ENCODE measurements at regions of chr4 and their contacts with region 1.

Region 1: DNA sequence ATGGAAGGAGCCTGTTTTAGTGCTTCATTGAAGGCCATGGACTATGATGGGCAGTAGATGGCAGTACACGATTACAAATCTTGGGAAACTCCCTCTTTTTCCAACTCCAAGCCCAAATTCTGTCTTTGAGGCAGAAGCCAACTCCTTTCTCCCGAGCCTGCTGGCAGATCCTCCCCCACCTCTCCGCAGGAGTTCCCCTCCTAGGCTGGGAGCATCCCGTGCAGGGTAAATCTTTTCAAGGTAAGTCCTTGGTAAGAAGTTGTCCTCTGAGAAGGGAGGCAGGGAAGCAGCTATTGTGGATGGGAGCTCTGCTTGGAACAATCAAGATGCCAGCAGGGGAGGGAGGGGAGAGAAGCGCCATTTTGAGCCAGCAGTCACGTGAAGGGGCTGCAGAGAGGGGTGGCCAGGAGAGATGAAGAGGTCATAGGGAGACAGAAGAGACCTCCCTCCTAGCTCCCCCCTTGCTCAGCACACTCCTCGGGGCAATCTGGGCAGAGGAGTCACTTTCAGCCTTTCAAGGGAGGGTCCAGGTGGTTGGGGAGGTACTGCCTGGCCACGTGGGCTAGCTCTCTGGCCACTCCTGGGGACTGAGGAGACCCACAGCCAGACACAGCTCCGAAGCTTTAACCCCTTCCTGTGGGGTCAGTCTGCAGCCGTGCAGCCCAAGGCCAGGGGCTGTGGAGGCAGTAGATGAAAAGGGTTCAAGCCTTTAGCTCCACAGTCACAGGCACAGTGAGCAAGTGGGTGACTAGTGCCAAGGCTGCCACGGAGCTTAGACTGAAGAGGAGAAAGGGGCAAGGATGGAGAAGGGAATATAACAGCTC is 9.6 kb downstream of the CC2D2A start:
- DNase-seq: peak; percentile 37 to 68
- H3K4me3 ChIP-seq: peak overlapping the region; percentile 55 to 56
- H3K27ac ChIP-seq: peak overlapping the region; percentile 75 to 79
- H3K4me1 ChIP-seq: peaks cover 0 to 25% (median 15%) of the 10 kb centered on the region in 4 donors
- H3K27me3 ChIP-seq: no peaks in the 10 kb centered on the region
- CTCF ChIP-seq: peak; percentile 63 to 74

Region 2: DNA sequence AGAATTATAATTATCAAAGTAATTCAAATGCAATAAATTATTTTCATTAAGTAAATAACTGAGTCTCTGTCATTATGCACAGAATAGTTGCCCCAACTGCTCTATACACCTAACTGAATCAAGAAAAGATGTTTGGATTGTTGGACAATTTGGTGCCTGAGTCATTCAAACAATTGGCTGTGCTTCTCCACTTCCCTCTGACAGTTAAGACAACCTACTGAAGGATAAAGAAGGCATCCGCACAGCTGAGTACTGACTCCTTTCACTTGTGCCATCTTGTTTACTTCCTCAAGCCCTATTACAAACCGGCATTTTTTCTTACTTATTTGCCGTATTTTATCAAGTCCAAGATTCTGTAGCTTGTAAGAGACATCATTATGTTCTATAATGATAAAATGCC is 162.1 kb before region 1 on chr4:
- intact Hi-C with region 1: no loop called
- DNase-seq: no peak
- H3K4me3 ChIP-seq: no peak overlapping the region
- H3K27ac ChIP-seq: no peak overlapping the region
- H3K4me1 ChIP-seq: peaks cover 0 to 28% (median 4%) of the 10 kb centered on the region in 4 donors
- H3K27me3 ChIP-seq: no peaks in the 10 kb centered on the region
- CTCF ChIP-seq: no peak

Region 3: DNA sequence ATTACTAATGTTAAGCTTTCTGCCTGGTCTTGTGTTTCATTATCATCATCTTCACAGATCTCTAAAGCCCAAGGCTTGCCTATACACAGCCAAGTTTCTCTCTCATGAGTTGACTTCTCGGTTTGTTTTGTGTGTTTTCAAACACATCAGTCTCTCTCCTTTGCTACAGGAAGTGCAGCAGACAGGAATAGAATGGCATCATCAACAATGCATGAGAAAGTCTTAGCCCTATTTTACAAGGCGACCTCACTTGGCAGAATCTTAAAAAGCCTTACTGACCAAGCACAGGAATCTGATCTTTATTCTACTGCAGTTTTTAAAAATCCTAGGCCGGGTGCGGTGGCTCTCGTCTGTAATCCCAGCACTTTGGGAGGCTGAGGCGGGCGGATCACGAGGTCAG is 27.2 kb after region 1 on chr4:
- intact Hi-C with region 1: no loop called
- DNase-seq: no peak
- H3K4me3 ChIP-seq: no peak overlapping the region
- H3K27ac ChIP-seq: peak overlapping the region in 1 of 2 donors; percentile 55
- H3K4me1 ChIP-seq: peaks cover 0 to 27% (median 0%) of the 10 kb centered on the region in 4 donors
- H3K27me3 ChIP-seq: no peaks in the 10 kb centered on the region
- CTCF ChIP-seq: no peak

Region 4: DNA sequence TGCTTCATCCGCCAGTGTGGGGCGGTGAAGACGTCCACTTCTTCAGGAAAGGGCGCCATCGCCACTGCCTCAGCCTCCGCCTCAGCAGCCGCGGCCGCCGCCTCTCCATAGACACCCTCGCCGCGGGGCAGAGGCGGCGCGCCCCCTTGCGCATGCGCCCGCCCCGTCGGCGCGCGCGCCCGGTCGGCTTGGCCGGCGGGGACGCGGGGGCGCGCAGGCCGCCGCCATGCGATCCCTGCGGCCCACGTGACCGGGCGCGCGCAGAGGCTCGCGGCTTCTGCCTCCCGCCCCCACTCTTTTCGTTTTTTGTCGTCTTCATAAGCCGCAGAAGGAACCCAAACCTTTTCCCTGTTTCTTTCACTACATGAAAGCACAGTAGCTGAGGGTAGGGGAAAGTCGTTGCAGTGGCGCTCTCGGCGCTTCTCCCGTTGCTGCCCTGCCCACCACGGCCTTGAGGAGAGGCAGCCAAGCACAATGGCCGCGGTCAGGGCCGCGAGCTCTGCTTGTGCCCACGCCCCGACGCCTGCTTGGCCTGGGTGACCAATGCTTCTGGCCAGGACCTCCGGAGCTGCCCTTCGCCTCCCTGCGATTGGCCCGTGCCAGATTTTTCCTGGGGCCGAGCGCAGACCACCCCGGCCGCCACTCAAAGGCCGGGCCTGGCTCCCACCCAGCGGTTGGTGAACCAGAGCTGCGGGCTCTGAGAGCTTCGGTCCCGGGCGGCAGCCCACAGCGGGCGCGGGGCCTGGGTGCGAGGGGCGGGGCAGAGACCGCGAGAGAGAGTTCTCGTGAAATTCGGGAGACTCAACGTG is 176.1 kb after region 1 on chr4 and contains the start of gene FBXL5:
- intact Hi-C with region 1: loop called (anchors 2 kb)
- DNase-seq: peak; percentile 74 to 87
- H3K4me3 ChIP-seq: peak within 1 kb of the TSS; percentile 67 to 90
- H3K27ac ChIP-seq: peak within 1 kb of the TSS; percentile 98 to 99
- H3K4me1 ChIP-seq: peaks cover 0 to 60% (median 18%) of the 10 kb centered on the region in 4 donors
- H3K27me3 ChIP-seq: no peaks in the 10 kb centered on the region
- CTCF ChIP-seq: peak in 1 of 2 experiments; percentile 16

Measured in tibial artery (tissue), 4 donors.